ENCODE measurements at regions of chr22 and their contacts with region 1.

Region 1: GRCh38 chr22:30453731-30454510 is 17.9 kb downstream of the SEC14L3 start:
- DNase-seq: no peak
- H3K4me3 ChIP-seq: no peak overlapping the region
- H3K27ac ChIP-seq: no peak overlapping the region
- H3K4me1 ChIP-seq: peaks cover 2% of the 10 kb centered on the region
- H3K27me3 ChIP-seq: no peaks in the 10 kb centered on the region
- CTCF ChIP-seq: no peak
- EP300 ChIP-seq: no peak
- POLR2A ChIP-seq: no peak

Region 2: DNA sequence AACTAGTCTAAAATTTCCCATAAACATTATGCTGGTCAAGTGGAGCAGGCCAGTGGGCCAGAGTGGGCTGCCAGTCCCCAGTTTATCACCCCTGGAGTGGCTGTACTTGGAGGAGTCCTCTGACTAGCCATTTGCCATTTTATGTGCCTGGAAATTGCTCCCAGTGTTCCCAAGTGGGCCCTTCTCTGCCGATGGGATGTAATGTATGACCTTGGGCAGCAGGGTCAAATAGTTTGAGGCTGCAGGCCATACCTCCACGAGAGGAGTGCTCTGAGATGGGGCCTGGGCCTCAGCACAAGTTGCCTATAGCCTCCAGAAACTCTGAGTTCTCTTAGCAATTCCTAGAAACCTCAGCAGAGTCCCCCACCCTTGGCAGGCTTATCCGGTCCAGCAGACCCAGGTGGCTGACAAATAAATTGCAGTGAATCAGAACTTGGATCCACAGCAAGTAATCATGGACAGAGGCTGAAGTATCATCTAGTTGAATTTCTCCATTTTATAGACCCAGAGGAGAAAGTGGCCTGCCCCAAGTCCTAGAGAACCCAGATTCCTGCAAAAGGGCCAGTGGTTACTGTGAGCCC is 910.1 kb after region 1 on chr22:
- intact Hi-C with region 1: loop called in 1 of 4 experiments (anchors 10 kb)
- DNase-seq: no peak
- H3K4me3 ChIP-seq: no peak overlapping the region
- H3K27ac ChIP-seq: no peak overlapping the region
- H3K4me1 ChIP-seq: no peaks in the 10 kb centered on the region
- H3K27me3 ChIP-seq: no peaks in the 10 kb centered on the region
- CTCF ChIP-seq: no peak
- EP300 ChIP-seq: no peak
- POLR2A ChIP-seq: no peak